IMR-90 (cell line): ENCODE measurements at regions of chr11 and their contacts with region 1.

Region 1: DNA sequence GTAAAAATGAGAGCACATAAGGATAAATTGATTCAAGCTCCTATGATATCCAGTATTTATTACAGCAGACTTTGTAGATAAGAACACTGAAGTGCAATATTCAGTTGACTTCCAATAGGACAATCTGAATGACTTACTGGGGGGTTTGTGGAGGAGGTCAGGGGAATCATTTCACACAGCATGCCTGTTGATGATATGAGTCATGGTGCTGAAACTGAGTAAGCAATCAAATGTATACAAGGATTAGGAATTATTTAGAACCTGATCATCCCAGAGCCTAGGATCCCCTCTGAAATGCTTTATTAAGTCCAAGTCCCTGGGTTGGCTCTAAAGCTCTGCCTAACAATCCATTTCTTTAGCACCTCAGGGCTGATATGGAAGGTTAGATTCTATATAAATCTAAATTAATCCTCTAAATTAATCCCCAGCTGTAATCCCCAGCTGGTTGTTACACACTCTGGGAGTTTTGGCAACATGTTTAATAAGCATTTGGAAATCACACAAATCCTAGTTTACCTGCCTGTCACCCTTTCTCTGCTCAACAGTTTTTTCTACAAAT is 326.4 kb downstream of the GUCY1A2 start:
- DNase-seq: peak; percentile 77
- ATAC-seq: peak; percentile 81
- H3K4me3 ChIP-seq: no peak overlapping the region
- H3K27ac ChIP-seq: no peak overlapping the region
- H3K4me1 ChIP-seq: peaks cover 2% of the 10 kb centered on the region
- H3K27me3 ChIP-seq: no peaks in the 10 kb centered on the region
- CTCF ChIP-seq: no peak
- POLR2A ChIP-seq: no peak
- RAD21 ChIP-seq: no peak

Region 2: DNA sequence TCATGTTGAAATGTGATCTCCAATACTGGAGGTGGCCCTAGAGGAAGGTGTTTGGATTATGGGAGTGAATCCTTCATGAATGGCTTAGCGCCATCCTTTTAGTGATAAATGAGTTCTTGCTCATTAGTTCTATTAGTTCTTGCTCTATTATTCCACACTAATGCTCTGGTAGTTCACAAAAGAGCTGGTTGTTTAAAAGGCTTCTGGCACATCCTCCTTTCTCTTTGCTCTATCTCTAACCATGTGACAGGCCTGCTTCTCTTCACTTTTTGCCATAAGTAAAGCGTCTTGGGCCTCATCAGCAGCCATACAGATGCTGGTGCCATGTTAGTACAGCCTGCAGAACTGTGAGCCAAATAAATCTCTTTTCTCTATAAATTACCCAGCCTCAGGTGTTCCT is 143.5 kb before region 1 on chr11:
- CTCF ChIA-PET with region 1: no interaction called
- POLR2A ChIA-PET with region 1: no interaction called
- dilution Hi-C with region 1: no loop called
- in situ Hi-C with region 1: no loop called
- intact Hi-C with region 1: no loop called
- DNase-seq: no peak
- ATAC-seq: no peak
- H3K4me3 ChIP-seq: no peak overlapping the region
- H3K27ac ChIP-seq: no peak overlapping the region
- H3K4me1 ChIP-seq: no peaks in the 10 kb centered on the region
- H3K27me3 ChIP-seq: no peaks in the 10 kb centered on the region
- CTCF ChIP-seq: no peak
- POLR2A ChIP-seq: no peak
- RAD21 ChIP-seq: no peak

Region 3: DNA sequence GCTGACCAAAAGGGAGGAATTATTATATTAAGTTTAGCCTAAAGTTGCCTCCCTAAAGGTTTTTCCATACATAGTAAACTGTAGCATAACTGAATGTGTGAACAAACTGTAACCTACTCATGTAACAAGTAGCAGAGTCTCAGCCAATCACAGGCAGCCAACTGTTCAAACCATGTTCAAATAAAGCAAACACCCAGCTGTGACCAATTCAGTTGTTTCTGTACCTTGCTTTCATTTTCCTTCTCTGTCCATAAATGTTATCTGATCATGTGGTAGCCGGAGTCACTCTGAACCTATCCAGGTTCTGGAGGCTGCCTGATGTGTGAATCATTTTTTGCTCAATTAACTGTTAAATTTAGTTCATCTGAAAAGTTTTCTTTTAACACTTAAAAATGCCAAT is 47.1 kb before region 1 on chr11:
- CTCF ChIA-PET with region 1: no interaction called
- POLR2A ChIA-PET with region 1: no interaction called
- dilution Hi-C with region 1: no loop called
- in situ Hi-C with region 1: no loop called
- intact Hi-C with region 1: loop called (anchors 5 kb)
- DNase-seq: peak; percentile 60
- ATAC-seq: no peak
- H3K4me3 ChIP-seq: no peak overlapping the region
- H3K27ac ChIP-seq: no peak overlapping the region
- H3K4me1 ChIP-seq: no peaks in the 10 kb centered on the region; the same call in none of the 2 replicates
- H3K27me3 ChIP-seq: no peaks in the 10 kb centered on the region
- CTCF ChIP-seq: no peak
- POLR2A ChIP-seq: no peak
- RAD21 ChIP-seq: no peak

Region 4: DNA sequence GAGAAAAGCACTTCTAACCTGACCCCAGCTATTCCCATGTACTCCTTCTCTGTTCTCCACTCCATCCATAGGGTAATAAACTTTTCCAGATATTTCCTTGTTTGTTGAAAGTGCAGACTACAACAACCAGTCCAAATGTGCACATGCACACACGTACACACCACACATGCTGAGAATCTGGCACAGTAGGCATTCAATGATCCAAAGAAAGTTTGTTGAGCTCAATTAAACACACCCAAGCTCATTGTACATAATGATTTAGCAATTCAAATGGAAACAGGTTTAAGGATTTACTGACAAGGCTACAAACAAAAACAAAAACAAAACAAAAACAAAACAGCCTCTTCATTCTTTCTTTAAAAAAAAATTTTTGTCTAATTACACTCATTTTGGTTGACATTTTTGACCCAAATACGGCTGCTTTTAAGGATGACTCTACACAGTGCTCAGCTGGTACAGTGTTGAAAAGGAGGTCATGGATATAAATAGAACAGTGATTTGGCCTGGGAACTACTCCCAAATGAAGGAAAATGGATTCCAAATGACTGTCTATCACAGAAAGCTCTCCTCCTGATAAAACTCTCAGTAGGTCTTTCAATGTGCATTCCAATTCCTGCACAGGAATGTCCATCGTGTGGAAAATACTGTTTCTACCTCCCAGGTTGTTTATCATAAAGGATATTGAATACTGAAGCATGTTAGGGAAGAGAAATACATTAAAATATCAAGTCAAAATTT is 94.2 kb after region 1 on chr11:
- CTCF ChIA-PET with region 1: no interaction called
- POLR2A ChIA-PET with region 1: no interaction called
- dilution Hi-C with region 1: no loop called
- in situ Hi-C with region 1: no loop called
- intact Hi-C with region 1: no loop called
- DNase-seq: no peak
- ATAC-seq: no peak
- H3K4me3 ChIP-seq: no peak overlapping the region
- H3K27ac ChIP-seq: no peak overlapping the region
- H3K4me1 ChIP-seq: no peaks in the 10 kb centered on the region
- H3K27me3 ChIP-seq: no peaks in the 10 kb centered on the region
- CTCF ChIP-seq: no peak
- POLR2A ChIP-seq: no peak
- RAD21 ChIP-seq: no peak